Thyroid gland (tissue), 4 donors: ENCODE measurements at regions of chr9 and their contacts with region 1.

Region 1: DNA sequence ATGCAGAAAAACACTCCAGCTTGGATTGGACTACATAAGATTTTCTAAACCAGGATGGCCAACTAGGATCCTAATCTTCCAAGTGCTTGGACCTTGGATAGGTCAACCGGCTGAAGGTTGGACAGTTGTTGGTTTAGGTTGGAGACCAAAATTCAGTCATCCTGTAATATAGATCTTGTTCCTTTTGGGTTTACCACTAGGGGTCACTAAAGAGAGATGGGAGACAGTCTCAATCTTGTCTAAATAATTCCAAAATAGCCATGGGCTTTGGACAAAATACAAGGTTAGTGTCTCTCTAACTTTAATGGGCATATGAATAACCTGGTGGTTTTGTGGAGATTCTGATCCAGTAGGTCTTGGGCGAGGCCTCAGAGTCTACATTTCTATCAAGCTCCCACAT is 148.7 kb upstream of the ERCC6L2 start:
- DNase-seq: no peak
- H3K4me3 ChIP-seq: no peak overlapping the region
- H3K27ac ChIP-seq: no peak overlapping the region
- H3K4me1 ChIP-seq: no peaks in the 10 kb centered on the region
- H3K27me3 ChIP-seq: no peaks in the 10 kb centered on the region
- CTCF ChIP-seq: peak; percentile 34 to 77 (median 56)
- POLR2A ChIP-seq: no peak

Region 2: GRCh38 chr9:96217754-96218693 is 491.3 kb after region 1 on chr9:
- intact Hi-C with region 1: loop called (anchors 5 kb)
- DNase-seq: peak; percentile 81 to 82
- H3K4me3 ChIP-seq: peak overlapping the region in 1 of 3 donors; percentile 5
- H3K27ac ChIP-seq: peak overlapping the region; percentile 75 to 77 (median 76)
- H3K4me1 ChIP-seq: peaks cover 20 to 21% of the 10 kb centered on the region in 2 donors
- H3K27me3 ChIP-seq: no peaks in the 10 kb centered on the region
- CTCF ChIP-seq: peak; percentile 83 to 99 (median 97)
- POLR2A ChIP-seq: no peak